ENCODE measurements at regions of chr1 and their contacts with region 1.

Region 1: GRCh38 chr1:151539990-151540981 is at the start of gene TUFT1:
- DNase-seq: peak; percentile 82 to 97 (median 92)

Region 2: DNA sequence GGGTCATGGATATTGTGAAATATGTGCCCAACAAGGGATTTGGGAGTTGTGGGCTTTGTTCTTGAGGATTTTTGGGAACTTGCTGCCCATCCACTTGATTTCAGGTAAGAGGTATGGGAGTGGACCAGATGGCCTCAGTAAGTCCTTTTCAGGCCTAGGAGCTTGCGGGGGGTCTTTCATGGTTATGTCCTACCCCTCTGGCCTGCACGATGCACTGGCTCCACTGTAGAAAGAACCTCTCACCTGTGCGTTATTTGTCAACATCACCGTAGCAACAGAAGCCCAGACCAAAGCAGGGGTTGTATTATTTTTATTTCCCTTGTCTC is 189.6 kb after region 1 on chr1:
- intact Hi-C with region 1: loop called (anchors 5 kb)
- DNase-seq: peak in 1 of 42 donors; percentile 20

Measured in head of caudate nucleus (tissue), 42 donors.